ENCODE measurements at regions of chr3 and their contacts with region 1.

Region 1: DNA sequence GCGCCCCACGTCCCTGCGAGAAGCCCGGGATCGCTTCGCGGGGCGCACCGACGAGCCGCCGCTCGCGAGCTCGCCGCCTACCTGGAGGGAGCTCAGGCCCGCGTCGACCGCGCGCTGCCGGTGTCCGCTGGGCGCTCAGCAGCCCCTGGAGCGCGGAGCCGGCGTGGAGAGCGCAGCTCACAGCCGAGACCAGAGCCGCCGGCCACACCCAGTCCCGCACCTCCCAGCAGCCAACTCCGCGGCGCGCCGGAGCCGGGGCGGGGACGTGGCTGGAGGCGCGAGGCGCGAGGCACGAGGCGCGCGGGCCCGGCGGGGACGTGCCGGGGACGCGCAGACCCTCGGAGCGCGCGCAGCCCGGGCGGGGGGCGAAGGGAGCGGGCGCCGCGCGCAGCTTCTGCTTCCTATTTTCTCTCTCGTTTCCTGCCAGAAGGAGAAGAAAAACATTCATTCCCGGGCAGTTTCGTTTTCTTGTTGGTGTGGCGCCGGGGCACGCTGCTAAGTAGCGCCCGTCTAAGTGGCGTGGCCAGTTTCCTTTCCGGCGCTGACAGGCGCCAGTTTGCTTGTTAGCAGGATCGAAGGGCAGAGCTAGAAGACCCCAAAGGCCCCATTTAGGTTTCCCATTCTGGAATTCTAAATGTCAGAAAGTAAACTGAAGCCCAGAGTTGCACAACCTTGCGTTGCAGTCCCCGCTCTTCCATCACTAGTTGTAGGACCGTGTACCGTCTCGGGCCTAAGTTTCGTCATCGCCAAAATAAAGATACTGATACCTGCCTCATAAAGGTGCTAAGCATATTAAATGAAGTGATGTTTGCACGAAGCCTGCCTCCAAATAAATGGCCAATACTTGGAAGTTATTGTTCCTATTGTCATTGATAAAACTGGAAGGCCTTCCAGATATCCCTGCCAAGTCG is at the start of gene GNB4:
- DNase-seq: peak; percentile 91
- ATAC-seq: peak; percentile 86
- H3K4me3 ChIP-seq: peak within 1 kb of the TSS; percentile 70 to 92 (median 78)
- H3K4me3 Mint-ChIP-seq: peak within 1 kb of the TSS; percentile 97
- H3K27ac ChIP-seq: peak within 1 kb of the TSS; percentile 57 to 75
- H3K27ac Mint-ChIP-seq: peak within 1 kb of the TSS; percentile 94
- H3K4me1 ChIP-seq: peaks cover 16 to 19% of the 10 kb centered on the region in 2 donors
- H3K4me1 Mint-ChIP-seq: peaks cover 44% of the 10 kb centered on the region
- H3K27me3 ChIP-seq: no peaks in the 10 kb centered on the region
- H3K27me3 Mint-ChIP-seq: no peaks in the 10 kb centered on the region
- CTCF ChIP-seq: no peak
- total RNA-seq, gene GNB4: 24.0 and 24.6 TPM in 2 replicates

Region 2: DNA sequence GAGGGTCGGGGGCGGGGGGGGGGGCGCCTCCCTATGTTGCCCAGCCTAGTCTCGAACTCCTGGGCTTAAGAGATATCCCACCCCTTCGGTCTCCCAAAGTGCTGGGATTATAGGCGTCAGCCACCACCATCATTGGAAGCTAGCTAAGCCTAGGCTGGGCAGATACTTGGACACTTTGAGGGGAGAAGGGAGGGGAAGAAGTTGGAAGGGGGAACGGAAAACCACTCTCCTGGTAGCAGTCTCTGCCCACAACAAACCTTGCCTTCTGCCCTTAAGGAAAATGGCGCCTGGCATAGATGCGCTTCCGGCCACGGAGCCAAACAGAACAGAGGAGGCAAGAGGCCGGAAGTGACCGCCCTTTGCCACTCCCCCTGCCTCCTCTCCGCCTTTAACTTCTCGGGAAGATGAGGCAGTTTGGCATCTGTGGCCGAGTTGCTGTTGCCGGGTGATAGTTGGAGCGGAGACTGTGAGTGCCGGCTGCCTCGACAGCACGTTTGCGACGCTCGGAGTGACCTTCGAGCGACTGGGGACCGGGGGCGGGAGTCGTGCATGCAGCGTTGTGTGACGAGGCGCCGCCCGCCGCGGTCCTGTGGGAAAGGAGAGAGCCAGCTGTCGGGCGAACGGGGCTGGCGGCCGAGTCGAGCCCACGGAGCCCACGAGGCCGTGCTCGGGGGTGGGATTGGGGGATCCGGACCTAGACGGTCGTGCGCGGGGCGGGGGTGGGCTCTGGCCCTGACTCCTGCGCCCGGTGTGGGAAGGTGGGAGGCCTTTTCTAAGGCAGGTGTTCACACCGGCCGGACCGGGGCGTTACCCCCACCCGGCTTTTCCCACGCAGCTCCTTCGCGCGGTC is 104.0 kb before region 1 on chr3 and contains the start of gene MFN1:
- CTCF ChIA-PET with region 1: no interaction called
- POLR2A ChIA-PET with region 1: no interaction called
- intact Hi-C with region 1: loop called (anchors 5 kb)
- DNase-seq: peak; percentile 92
- ATAC-seq: peak; percentile 88
- H3K4me3 ChIP-seq: peak within 1 kb of the TSS; percentile 83 to 99 (median 98)
- H3K4me3 Mint-ChIP-seq: peak within 1 kb of the TSS; percentile 95
- H3K27ac ChIP-seq: peak within 1 kb of the TSS; percentile 71 to 86
- H3K27ac Mint-ChIP-seq: peak within 1 kb of the TSS; percentile 93
- H3K4me1 ChIP-seq: peaks cover 17 to 32% of the 10 kb centered on the region in 2 donors
- H3K4me1 Mint-ChIP-seq: peaks cover 28% of the 10 kb centered on the region
- H3K27me3 ChIP-seq: no peaks in the 10 kb centered on the region
- H3K27me3 Mint-ChIP-seq: no peaks in the 10 kb centered on the region
- CTCF ChIP-seq: no peak
- total RNA-seq, gene MFN1: 98.9 and 108 TPM in 2 replicates

Region 3: GRCh38 chr3:179391906-179392305 is 59.6 kb before region 1 on chr3:
- CTCF ChIA-PET with region 1: no interaction called
- POLR2A ChIA-PET with region 1: no interaction called
- intact Hi-C with region 1: no loop called
- DNase-seq: no peak
- ATAC-seq: no peak
- H3K4me3 ChIP-seq: no peak overlapping the region
- H3K4me3 Mint-ChIP-seq: no peak overlapping the region
- H3K27ac ChIP-seq: peak overlapping the region in 1 of 2 donors; percentile 30
- H3K27ac Mint-ChIP-seq: no peak overlapping the region
- H3K4me1 ChIP-seq: no peaks in the 10 kb centered on the region
- H3K4me1 Mint-ChIP-seq: peaks cover 4% of the 10 kb centered on the region
- H3K27me3 ChIP-seq: no peaks in the 10 kb centered on the region
- H3K27me3 Mint-ChIP-seq: no peaks in the 10 kb centered on the region
- CTCF ChIP-seq: no peak

Region 4: GRCh38 chr3:179416681-179417080 is 34.8 kb before region 1 on chr3:
- CTCF ChIA-PET with region 1: no interaction called
- POLR2A ChIA-PET with region 1: no interaction called
- intact Hi-C with region 1: no loop called
- DNase-seq: no peak
- ATAC-seq: no peak
- H3K4me3 ChIP-seq: no peak overlapping the region
- H3K4me3 Mint-ChIP-seq: no peak overlapping the region
- H3K27ac ChIP-seq: no peak overlapping the region
- H3K27ac Mint-ChIP-seq: no peak overlapping the region
- H3K4me1 ChIP-seq: no peaks in the 10 kb centered on the region
- H3K4me1 Mint-ChIP-seq: no peaks in the 10 kb centered on the region
- H3K27me3 ChIP-seq: no peaks in the 10 kb centered on the region
- H3K27me3 Mint-ChIP-seq: no peaks in the 10 kb centered on the region
- CTCF ChIP-seq: no peak

Region 5: GRCh38 chr3:179432021-179432420 is 19.5 kb before region 1 on chr3:
- CTCF ChIA-PET with region 1: interaction called, 3 read pairs
- POLR2A ChIA-PET with region 1: interaction called, 3 read pairs
- intact Hi-C with region 1: loop called (anchors 2 kb)
- DNase-seq: peak; percentile 61
- ATAC-seq: peak; percentile 75
- H3K4me3 ChIP-seq: peak overlapping the region in 4 of 5 experiments; percentile 23 to 44 (median 34)
- H3K4me3 Mint-ChIP-seq: peak overlapping the region; percentile 38
- H3K27ac ChIP-seq: peak overlapping the region; percentile 22 to 67
- H3K27ac Mint-ChIP-seq: peak overlapping the region; percentile 46
- H3K4me1 ChIP-seq: peaks cover 30 to 44% of the 10 kb centered on the region in 2 donors
- H3K4me1 Mint-ChIP-seq: peaks cover 51% of the 10 kb centered on the region
- H3K27me3 ChIP-seq: no peaks in the 10 kb centered on the region
- H3K27me3 Mint-ChIP-seq: no peaks in the 10 kb centered on the region
- CTCF ChIP-seq: no peak

Region 6: GRCh38 chr3:179438841-179439240 is 12.7 kb before region 1 on chr3:
- CTCF ChIA-PET with region 1: interaction called, 6 read pairs
- POLR2A ChIA-PET with region 1: interaction called, 5 read pairs
- intact Hi-C with region 1: loop called (anchors 1 kb)
- DNase-seq: peak; percentile 94
- ATAC-seq: peak; percentile 92
- H3K4me3 ChIP-seq: peak overlapping the region in 4 of 5 experiments; percentile 1 to 60 (median 36)
- H3K4me3 Mint-ChIP-seq: peak overlapping the region; percentile 72
- H3K27ac ChIP-seq: peak overlapping the region; percentile 73 to 84
- H3K27ac Mint-ChIP-seq: peak overlapping the region; percentile 89
- H3K4me1 ChIP-seq: peaks cover 33 to 45% of the 10 kb centered on the region in 2 donors
- H3K4me1 Mint-ChIP-seq: peaks cover 44% of the 10 kb centered on the region
- H3K27me3 ChIP-seq: no peaks in the 10 kb centered on the region
- H3K27me3 Mint-ChIP-seq: no peaks in the 10 kb centered on the region
- CTCF ChIP-seq: no peak

Region 7: GRCh38 chr3:179604321-179605078 is 153.0 kb after region 1 on chr3 and contains the starts of genes MRPL47 and NDUFB5:
- CTCF ChIA-PET with region 1: no interaction called
- POLR2A ChIA-PET with region 1: no interaction called
- intact Hi-C with region 1: loop called (anchors 5 kb)
- DNase-seq: peak; percentile 96
- ATAC-seq: peak; percentile 98
- H3K4me3 ChIP-seq: peak within 1 kb of the TSS; percentile 65 to 96 (median 80)
- H3K4me3 Mint-ChIP-seq: peak within 1 kb of the TSS; percentile 99
- H3K27ac ChIP-seq: peak within 1 kb of the TSS; percentile 72 to 97
- H3K27ac Mint-ChIP-seq: peak within 1 kb of the TSS; percentile 98
- H3K4me1 ChIP-seq: peaks cover 39 to 44% of the 10 kb centered on the region in 2 donors
- H3K4me1 Mint-ChIP-seq: peaks cover 51% of the 10 kb centered on the region
- H3K27me3 ChIP-seq: no peaks in the 10 kb centered on the region
- H3K27me3 Mint-ChIP-seq: no peaks in the 10 kb centered on the region
- CTCF ChIP-seq: no peak
- total RNA-seq, gene MRPL47: 20.2 and 22.0 TPM in 2 replicates
- total RNA-seq, gene NDUFB5: 52.9 and 60.2 TPM in 2 replicates

Region 8: DNA sequence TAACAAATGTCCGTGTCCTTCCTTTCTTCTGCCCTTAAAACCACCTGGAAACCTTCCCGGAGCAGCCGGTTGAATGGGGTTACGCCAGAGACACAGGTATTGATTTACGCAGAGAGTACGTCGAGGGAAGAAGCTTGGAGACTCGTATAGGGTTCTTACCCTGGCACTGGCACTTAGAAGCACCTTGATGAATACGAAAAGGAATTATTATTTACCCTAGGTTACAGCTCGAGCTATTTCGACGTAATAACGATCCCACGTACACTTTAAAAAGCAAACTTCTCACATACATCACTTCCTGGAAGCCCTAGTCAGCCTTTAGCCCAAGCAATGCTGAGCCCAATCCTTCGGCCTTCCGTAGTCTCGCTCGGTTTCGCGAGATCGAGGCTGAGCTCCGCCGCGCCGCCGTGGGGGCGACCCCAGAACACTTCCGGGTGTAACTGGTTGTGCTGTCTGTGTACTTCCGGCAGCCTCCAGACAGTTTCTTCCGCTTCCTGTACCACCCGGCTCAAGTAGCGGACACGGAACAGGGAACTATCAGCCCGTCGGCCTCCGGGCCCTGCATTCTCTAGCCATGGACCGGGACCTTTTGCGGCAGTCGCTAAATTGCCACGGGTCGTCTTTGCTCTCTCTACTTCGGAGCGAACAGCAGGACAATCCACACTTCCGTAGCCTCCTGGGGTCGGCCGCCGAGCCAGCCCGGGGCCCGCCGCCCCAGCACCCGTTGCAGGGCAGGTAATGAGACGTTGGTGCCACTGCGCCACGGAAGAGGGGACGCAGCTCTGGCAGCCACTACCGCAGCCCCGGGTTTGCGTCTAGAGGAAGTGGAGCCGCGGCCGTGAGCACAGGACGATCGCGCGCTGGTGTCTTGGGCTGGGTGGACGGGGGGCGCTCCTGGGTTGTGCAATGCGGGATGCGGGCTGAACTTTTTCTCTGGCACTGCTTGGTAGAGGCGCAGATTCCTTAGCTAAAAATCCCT is 1150.5 kb after region 1 on chr3 and contains the start of gene TTC14:
- CTCF ChIA-PET with region 1: no interaction called
- POLR2A ChIA-PET with region 1: no interaction called
- intact Hi-C with region 1: loop called (anchors 5 kb)
- DNase-seq: peak; percentile 96
- ATAC-seq: peak; percentile 88
- H3K4me3 ChIP-seq: peak within 1 kb of the TSS; percentile 75 to 86 (median 80)
- H3K4me3 Mint-ChIP-seq: peak within 1 kb of the TSS; percentile 93
- H3K27ac ChIP-seq: peak within 1 kb of the TSS; percentile 88 to 90
- H3K27ac Mint-ChIP-seq: peak within 1 kb of the TSS; percentile 98
- H3K4me1 ChIP-seq: peaks cover 12 to 17% of the 10 kb centered on the region in 2 donors
- H3K4me1 Mint-ChIP-seq: peaks cover 25% of the 10 kb centered on the region
- H3K27me3 ChIP-seq: peaks cover 0 to 4% (median 0%) of the 10 kb centered on the region in 4 experiments
- H3K27me3 Mint-ChIP-seq: peaks cover 24% of the 10 kb centered on the region
- CTCF ChIP-seq: no peak
- total RNA-seq, gene TTC14: 136 and 139 TPM in 2 replicates

Measured in B cell (primary cell).